ENCODE measurements at regions of chr19 and their contacts with region 1.

Region 1: DNA sequence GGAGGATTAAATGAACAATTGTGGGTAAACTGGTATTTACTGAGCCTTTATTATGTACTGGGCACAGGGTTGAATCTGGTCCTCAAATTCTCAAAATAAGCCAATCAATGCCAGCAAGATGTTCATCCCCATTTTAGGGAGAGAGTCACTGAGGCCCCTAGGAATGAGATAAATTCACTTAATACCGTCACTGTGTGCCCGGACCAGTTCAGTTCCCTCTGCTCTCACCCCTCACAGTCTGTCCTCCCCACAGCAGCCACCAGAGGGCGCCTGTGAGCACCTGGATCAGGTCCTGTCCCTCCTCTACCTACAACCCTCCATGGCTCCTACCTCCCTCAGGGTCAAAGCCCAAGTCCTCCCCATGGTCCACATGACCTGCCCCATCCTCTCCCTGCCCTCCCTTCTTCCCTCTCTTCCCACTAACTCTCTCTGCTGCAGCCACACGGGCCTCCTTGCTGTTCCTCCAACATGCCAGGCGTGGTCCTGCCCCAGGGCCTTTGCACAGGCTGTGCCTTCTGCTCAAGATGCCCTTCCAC is 42.0 kb upstream of the NFIC start:
- DNase-seq: peak; percentile 35
- H3K4me3 ChIP-seq: no peak overlapping the region
- H3K27ac ChIP-seq: no peak overlapping the region
- H3K27me3 ChIP-seq: no peaks in the 10 kb centered on the region
- CTCF ChIP-seq: peak; percentile 91

Region 2: GRCh38 chr19:3270902-3271301 is 53.5 kb before region 1 on chr19:
- in situ Hi-C with region 1: no loop called
- DNase-seq: peak; percentile 11
- H3K4me3 ChIP-seq: no peak overlapping the region
- H3K27ac ChIP-seq: no peak overlapping the region
- H3K27me3 ChIP-seq: peaks cover 24% of the 10 kb centered on the region
- CTCF ChIP-seq: no peak

Region 3: GRCh38 chr19:3469638-3470499 is 145.5 kb after region 1 on chr19:
- in situ Hi-C with region 1: loop called (anchors 10 kb)
- DNase-seq: no peak
- H3K4me3 ChIP-seq: no peak overlapping the region
- H3K27ac ChIP-seq: no peak overlapping the region
- H3K27me3 ChIP-seq: no peaks in the 10 kb centered on the region
- CTCF ChIP-seq: peak; percentile 40